Activated B cell treated with CpG ODN at 0.5 μM for 24 hours (primary cell): ENCODE measurements at regions of chr18 and their contacts with region 1.

Region 1: DNA sequence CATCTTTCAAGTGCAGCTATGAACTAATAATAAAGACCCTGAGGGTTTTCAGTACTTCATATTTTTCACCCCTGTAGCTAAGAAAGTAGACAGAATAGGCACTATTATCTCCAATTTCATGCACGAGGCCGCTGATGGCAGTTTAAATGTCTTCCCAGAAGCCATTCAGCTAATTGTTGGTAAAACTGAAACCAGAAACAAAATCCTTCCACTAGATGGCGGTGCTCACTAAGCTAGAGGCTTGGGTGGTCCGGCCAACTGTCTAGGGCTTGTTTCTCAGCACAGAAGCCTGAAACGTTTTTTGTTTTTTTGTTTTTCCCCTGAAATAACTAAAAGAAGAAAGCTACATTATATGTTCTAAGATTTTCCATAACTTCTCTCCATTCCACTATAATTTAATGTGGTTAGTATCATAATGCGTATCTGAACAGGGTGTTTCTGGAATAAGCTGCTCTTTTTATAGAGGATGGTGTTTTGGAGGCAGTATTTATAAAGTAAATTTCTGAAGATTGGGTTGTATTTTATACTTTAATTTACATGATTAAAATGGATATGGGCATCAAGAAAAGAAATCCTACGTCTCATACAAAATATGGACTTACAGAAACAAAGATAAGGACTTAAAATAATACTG is 159.4 kb downstream of the PIK3C3 start:
- DNase-seq: no peak
- ATAC-seq: peak; percentile 65
- H3K4me3 Mint-ChIP-seq: no peak overlapping the region
- H3K27ac Mint-ChIP-seq: no peak overlapping the region
- H3K4me1 Mint-ChIP-seq: peaks cover 15% of the 10 kb centered on the region
- H3K27me3 Mint-ChIP-seq: no peaks in the 10 kb centered on the region
- CTCF ChIP-seq: peak; percentile 85

Region 2: GRCh38 chr18:41216341-41217003 is 898.0 kb before region 1 on chr18:
- CTCF ChIA-PET with region 1: no interaction called
- POLR2A ChIA-PET with region 1: no interaction called
- intact Hi-C with region 1: no loop called
- DNase-seq: no peak
- ATAC-seq: no peak
- H3K4me3 Mint-ChIP-seq: no peak overlapping the region
- H3K27ac Mint-ChIP-seq: no peak overlapping the region
- H3K4me1 Mint-ChIP-seq: no peaks in the 10 kb centered on the region
- H3K27me3 Mint-ChIP-seq: no peaks in the 10 kb centered on the region
- CTCF ChIP-seq: no peak

Region 3: DNA sequence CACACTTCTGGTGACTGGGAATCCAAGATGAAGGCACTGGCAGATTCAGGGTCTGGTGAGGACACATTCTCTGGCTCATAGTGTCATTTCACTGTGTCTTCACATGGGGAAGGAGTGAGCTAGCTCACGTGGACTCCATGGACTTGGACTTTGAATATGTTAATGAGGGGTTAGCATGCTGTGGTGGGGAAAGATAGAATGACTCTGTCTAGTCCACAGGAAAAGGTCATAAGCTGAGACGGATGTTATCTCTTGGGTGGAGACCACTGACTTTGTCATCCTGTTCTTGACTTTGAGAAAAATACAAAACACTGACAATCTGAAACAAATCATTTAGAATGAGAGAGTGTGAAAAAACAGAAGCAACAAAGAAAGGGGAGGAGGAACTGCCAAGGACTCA is 13.5 kb before region 1 on chr18:
- CTCF ChIA-PET with region 1: interaction called, 21 read pairs
- POLR2A ChIA-PET with region 1: no interaction called
- intact Hi-C with region 1: no loop called
- DNase-seq: no peak
- ATAC-seq: no peak
- H3K4me3 Mint-ChIP-seq: no peak overlapping the region
- H3K27ac Mint-ChIP-seq: no peak overlapping the region
- H3K4me1 Mint-ChIP-seq: no peaks in the 10 kb centered on the region
- H3K27me3 Mint-ChIP-seq: no peaks in the 10 kb centered on the region
- CTCF ChIP-seq: no peak

Region 4: DNA sequence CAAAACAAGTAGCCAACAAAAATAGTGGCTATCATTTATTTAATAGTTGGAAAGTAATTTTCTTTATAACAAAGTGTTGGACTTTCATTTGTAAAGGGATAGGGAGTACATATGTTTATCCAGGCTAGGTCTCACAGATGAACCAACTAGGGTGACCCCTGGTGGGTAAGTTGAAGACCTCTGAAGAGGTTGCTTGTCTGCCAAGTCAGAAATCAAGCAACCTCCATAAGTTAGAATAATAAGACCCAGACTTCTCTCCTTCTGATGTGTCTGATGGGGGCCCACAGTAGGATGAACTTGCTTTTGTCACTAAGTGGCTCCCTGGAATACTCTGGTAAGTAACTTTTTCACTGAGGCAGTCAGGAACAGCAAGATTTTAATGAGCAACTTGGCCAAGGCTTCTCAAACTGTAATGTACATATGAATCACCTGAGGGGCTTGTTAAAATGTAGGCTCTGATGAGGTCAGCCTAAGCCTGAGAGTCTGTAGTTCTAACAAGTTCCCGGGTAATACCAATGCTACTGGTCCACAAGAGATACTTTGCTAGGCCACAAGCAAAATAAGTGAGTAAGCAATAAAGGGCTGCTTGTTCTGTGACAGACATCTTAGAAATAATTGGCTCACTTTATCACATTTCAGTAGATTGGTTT is 160.2 kb after region 1 on chr18:
- CTCF ChIA-PET with region 1: interaction called, 9 read pairs
- POLR2A ChIA-PET with region 1: no interaction called
- intact Hi-C with region 1: loop called (anchors 1 kb)
- DNase-seq: no peak
- ATAC-seq: no peak
- H3K4me3 Mint-ChIP-seq: no peak overlapping the region
- H3K27ac Mint-ChIP-seq: no peak overlapping the region
- H3K4me1 Mint-ChIP-seq: no peaks in the 10 kb centered on the region
- H3K27me3 Mint-ChIP-seq: no peaks in the 10 kb centered on the region
- CTCF ChIP-seq: no peak

Region 5: DNA sequence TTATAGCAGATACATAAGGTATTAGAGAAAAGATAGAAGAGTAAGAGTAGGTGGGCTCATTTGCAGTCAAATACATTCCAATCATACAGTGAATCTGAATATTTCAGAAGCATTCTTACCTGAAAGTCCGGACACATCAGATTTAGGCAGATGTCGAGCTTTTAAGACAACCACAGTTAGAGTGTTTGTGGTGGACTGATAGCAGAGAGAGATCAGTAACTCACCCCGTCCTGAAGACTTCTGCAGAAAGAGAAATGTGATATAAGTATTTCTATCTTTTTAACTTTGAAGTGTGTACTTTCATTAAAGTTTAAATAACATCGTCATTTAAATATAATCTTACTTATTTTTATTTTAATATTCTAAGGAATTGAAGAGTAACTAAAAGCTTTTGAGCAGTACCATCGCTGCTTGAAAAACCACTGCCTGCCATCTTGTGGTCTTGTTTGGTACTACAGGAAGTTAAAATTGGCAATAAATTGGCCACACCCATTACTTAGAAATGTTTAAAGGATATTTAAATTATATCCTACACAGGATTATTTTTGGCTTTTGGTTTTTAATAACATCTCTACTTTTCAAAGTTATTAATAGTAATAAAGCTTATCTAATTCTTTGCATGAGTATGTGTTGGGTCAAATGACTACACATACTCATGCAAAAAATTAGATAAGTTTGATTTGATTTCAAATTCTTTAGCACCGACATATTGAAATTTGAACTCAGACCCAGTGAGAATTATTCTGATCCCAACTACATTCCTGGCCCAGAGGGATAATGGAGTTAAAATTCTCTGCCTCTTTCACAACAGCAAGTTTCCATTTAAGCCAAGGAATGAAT is 1157.4 kb after region 1 on chr18:
- CTCF ChIA-PET with region 1: interaction called, 68 read pairs
- POLR2A ChIA-PET with region 1: no interaction called
- intact Hi-C with region 1: loop called (anchors 1 kb)
- DNase-seq: no peak
- ATAC-seq: peak; percentile 34
- H3K4me3 Mint-ChIP-seq: no peak overlapping the region
- H3K27ac Mint-ChIP-seq: no peak overlapping the region
- H3K4me1 Mint-ChIP-seq: no peaks in the 10 kb centered on the region
- H3K27me3 Mint-ChIP-seq: peaks cover 3% of the 10 kb centered on the region
- CTCF ChIP-seq: peak; percentile 83